PC-9 (cell line): ENCODE measurements at regions of chr9 and their contacts with region 1.

Region 1: DNA sequence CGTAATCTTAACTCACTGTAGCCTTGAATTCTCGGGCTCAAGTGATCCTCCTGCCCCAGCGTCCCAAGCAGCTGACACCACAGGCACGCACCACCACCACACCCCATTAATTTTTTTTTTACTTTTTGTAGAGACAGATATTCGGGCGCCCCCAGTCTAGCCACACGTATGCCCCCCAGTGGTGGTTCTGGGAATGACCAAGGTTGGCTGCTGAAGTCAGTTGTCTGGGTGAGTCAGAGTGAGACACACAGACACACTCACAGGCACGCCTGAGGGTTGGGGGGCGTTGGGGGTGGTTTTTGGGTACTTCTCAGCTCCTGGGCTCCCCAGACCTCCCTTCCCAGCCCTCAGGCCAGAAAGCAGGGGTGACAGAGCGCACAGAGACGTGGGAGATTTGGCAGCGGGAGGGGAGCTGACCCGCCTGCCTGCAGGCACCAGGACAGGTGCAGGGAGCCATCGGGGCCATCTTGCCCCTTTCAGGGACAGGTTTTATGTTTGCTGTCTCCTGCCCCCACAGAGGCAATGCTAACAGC is 4.2 kb upstream of the ENTPD8 start:
- DNase-seq: peak; percentile 76 to 93
- H3K4me3 ChIP-seq: no peak overlapping the region
- H3K27ac ChIP-seq: no peak overlapping the region
- H3K4me1 ChIP-seq: peaks cover 18% of the 10 kb centered on the region
- H3K27me3 ChIP-seq: no peaks in the 10 kb centered on the region
- CTCF ChIP-seq: peak; percentile 93

Region 2: DNA sequence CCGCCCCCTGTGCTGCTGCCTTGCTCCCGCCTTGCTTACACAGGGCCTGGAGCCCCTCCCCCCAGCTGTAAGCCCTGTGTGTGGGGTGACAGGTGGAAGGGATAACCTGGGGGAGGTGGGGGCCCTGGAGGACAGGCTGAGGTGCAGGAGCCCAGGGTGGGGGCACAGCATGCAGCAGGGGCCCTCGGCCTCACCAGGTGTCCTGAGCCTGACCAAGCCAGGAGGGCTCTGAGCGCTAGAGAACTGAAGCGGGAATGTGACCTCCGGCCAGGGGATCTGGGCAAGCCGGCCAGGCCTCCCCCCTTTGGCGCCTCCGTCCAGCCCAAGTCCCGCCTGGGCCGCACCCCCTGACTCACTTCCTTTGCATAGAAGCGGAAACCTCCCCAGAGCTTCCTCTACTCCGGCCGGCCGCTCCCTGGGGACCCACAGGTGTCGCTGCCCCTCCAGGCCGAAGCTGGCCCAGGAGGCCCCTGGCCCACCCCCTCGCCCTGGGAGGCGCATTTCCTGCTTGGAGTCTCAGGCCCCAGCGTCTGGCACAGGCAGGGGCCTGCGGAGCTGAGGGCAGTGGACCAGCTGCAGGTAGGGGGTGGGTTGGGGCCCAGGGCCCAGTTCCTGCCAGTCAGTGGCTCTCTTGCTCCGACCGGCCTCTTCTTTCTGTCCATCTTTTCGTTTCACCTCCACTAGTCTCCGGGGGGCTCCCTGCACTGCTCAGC is 167.9 kb before region 1 on chr9 and contains the start of gene TOR4A:
- CTCF ChIA-PET with region 1: interaction called, 11 read pairs
- POLR2A ChIA-PET with region 1: interaction called, 3 read pairs
- intact Hi-C with region 1: no loop called
- DNase-seq: peak; percentile 90 to 98
- H3K4me3 ChIP-seq: peak within 1 kb of the TSS; percentile 89
- H3K27ac ChIP-seq: peak within 1 kb of the TSS; percentile 60
- H3K4me1 ChIP-seq: peaks cover 16% of the 10 kb centered on the region
- H3K27me3 ChIP-seq: no peaks in the 10 kb centered on the region
- CTCF ChIP-seq: no peak; the same call in 1 of the 2 replicates
- total RNA-seq, gene TOR4A: 48.9 and 59.9 TPM in 2 replicates

Region 3: DNA sequence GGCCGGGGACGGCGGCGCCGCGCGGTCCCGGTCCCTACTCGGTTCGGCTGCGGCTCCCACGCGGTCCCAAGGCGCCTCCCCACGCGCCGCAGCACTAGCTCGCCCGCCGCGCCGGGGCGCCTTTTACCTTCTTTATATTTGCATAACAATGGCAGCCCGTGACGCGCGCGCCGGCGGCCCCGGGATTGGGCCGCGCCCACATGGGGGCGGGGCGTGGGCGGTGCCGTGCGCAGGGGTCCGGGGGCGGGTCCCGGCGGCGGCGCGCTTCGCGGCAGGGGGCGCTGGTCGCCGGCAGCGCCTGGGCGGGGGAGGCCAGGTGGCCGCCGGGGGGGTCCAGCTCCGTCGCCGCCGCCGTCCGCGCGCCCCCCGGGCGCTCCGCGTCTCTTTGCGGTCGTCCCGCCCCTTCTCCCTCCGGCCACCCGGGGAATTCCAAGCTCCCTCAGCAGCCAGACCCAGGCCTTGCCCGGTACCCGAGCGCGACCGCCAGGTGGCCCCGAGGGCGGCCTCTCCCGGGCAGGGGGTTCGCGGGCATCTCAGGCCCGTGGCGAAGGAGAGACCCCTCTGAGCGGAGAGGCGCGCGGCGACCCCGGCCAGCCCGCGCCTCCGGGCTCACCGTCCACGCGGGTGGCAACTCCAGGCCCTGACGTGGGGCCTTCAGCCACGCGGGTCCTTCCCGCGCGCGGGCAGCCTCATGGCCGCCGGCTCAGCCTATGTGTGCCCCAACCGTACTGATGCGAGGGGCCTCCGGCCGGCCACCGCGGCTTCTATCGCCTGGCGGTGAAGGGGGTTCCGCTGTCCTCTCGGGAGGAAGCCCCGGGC is 143.0 kb before region 1 on chr9 and contains the start of gene NRARP:
- CTCF ChIA-PET with region 1: interaction called, 5 read pairs
- POLR2A ChIA-PET with region 1: no interaction called
- intact Hi-C with region 1: loop called (anchors 1 kb)
- DNase-seq: peak; percentile 63 to 95
- H3K4me3 ChIP-seq: peak within 1 kb of the TSS; percentile 98
- H3K27ac ChIP-seq: peak within 1 kb of the TSS; percentile 75
- H3K4me1 ChIP-seq: peaks cover 20% of the 10 kb centered on the region
- H3K27me3 ChIP-seq: no peaks in the 10 kb centered on the region
- CTCF ChIP-seq: peak; percentile 65; the same call in 1 of the 2 replicates
- total RNA-seq, gene NRARP: 20.6 and 25.8 TPM in 2 replicates

Region 4: GRCh38 chr9:137423004-137423874 is 22.1 kb before region 1 on chr9 and contains the starts of genes EXD3 and NOXA1:
- CTCF ChIA-PET with region 1: interaction called, 18 read pairs
- POLR2A ChIA-PET with region 1: interaction called, 5 read pairs
- intact Hi-C with region 1: loop called (anchors 1 kb)
- DNase-seq: peak; percentile 72 to 97
- H3K4me3 ChIP-seq: peak within 1 kb of the TSS; percentile 92
- H3K27ac ChIP-seq: peak within 1 kb of the TSS; percentile 83
- H3K4me1 ChIP-seq: peaks cover 17% of the 10 kb centered on the region
- H3K27me3 ChIP-seq: no peaks in the 10 kb centered on the region
- CTCF ChIP-seq: peak; percentile 63
- total RNA-seq, gene EXD3: 23.7 and 38.5 TPM in 2 replicates
- total RNA-seq, gene NOXA1: 10.5 and 22.8 TPM in 2 replicates